Activated naive CD4-positive, alpha-beta T cell treated with anti-CD3 and anti-CD28 coated beads for 36 hours (primary cell): ENCODE measurements at regions of chr7 and their contacts with region 1.

Region 1: GRCh38 chr7:157250605-157251228 is 86.1 kb upstream of the DNAJB6 start:
- DNase-seq: peak; percentile 70
- H3K4me3 Mint-ChIP-seq: no peak overlapping the region
- H3K27ac Mint-ChIP-seq: no peak overlapping the region
- H3K4me1 Mint-ChIP-seq: no peaks in the 10 kb centered on the region
- H3K27me3 Mint-ChIP-seq: no peaks in the 10 kb centered on the region

Region 2: GRCh38 chr7:156735851-156736250 is 514.9 kb before region 1 on chr7:
- CTCF ChIA-PET with region 1: no interaction called
- intact Hi-C with region 1: no loop called
- DNase-seq: no peak
- H3K4me3 Mint-ChIP-seq: no peak overlapping the region
- H3K27ac Mint-ChIP-seq: no peak overlapping the region
- H3K4me1 Mint-ChIP-seq: no peaks in the 10 kb centered on the region
- H3K27me3 Mint-ChIP-seq: no peaks in the 10 kb centered on the region

Region 3: DNA sequence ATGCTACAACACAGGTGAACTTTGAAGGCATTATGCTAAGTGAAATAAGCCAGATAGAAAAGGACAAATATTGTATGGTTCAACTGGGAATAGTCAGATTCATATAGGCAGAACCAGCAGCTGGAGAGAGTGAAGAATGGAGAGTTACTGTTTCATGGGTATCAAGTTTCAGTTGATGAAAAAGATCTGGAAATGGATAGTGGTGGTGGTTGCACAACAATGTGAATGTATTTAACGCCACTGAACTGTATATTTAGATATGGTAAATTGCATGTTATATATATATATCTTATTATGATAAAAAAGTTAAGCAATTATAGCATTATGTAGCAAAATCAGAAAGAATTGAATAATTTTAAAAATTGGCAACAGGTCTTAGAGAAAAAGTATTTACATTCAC is 361.6 kb before region 1 on chr7:
- CTCF ChIA-PET with region 1: no interaction called
- intact Hi-C with region 1: no loop called
- DNase-seq: no peak
- H3K4me3 Mint-ChIP-seq: no peak overlapping the region
- H3K27ac Mint-ChIP-seq: no peak overlapping the region
- H3K4me1 Mint-ChIP-seq: peaks cover 30% of the 10 kb centered on the region
- H3K27me3 Mint-ChIP-seq: no peaks in the 10 kb centered on the region

Region 4: GRCh38 chr7:156907656-156908055 is 343.1 kb before region 1 on chr7:
- CTCF ChIA-PET with region 1: interaction called, 4 read pairs
- intact Hi-C with region 1: loop called (anchors 1 kb)
- DNase-seq: no peak
- H3K4me3 Mint-ChIP-seq: no peak overlapping the region
- H3K27ac Mint-ChIP-seq: no peak overlapping the region
- H3K4me1 Mint-ChIP-seq: peaks cover 12% of the 10 kb centered on the region
- H3K27me3 Mint-ChIP-seq: peaks cover 7% of the 10 kb centered on the region

Region 5: DNA sequence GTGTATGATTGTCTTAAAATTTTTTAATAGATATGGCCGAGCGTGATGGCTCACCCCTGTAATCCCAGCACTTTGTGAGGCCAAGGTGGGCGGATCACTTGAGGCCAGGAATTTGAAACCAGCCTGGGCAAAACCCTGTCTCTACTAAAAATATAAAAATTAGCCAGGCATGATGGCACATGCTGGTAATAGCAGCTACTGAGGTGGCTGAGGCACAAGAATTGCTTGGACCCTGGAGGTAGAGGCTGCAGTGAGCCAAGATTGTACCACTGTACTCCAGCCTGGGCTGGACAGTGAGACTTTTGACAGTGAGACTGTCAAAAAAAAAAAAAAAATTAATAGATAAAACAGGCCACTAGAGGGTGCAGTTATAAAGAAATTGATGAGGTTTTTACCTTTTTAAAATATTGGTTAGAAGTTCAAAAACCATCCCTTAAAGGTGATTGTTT is 280.7 kb before region 1 on chr7:
- CTCF ChIA-PET with region 1: no interaction called
- intact Hi-C with region 1: loop called (anchors 1 kb)
- DNase-seq: no peak
- H3K4me3 Mint-ChIP-seq: no peak overlapping the region
- H3K27ac Mint-ChIP-seq: no peak overlapping the region
- H3K4me1 Mint-ChIP-seq: no peaks in the 10 kb centered on the region
- H3K27me3 Mint-ChIP-seq: no peaks in the 10 kb centered on the region

Region 6: DNA sequence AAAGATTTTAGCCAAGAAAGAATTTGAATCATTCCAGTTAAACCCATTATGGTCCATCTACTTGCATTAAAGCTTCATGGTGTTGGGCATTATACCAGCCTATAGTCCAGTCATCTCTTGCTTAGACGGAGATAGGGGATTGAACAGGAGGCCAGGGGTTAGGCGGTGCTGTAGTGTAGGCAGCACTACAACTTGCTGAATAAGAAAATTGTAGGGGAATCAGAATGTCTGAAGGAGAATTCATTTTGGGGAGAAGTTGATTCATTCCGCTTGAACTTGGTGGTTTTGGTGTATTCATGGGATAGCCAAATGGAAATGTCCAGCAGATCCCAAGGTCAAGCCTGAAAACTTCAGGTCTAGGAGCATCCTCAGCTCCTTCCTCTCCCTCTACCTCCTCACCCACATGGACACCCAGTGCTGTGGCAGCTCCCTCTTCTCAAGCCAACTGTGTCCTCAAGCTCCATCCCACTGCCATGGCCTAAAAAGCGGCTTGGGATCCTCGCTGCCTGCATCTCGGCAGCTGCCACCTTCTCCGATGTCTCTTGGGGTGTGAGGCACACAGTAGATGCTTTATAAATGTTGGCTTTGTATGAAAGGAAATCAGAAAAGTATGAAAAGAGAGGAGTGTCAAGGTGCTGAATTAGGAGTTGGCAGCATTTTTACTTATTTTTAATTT is 176.6 kb before region 1 on chr7:
- CTCF ChIA-PET with region 1: no interaction called
- intact Hi-C with region 1: no loop called
- DNase-seq: no peak
- H3K4me3 Mint-ChIP-seq: no peak overlapping the region
- H3K27ac Mint-ChIP-seq: no peak overlapping the region
- H3K4me1 Mint-ChIP-seq: no peaks in the 10 kb centered on the region
- H3K27me3 Mint-ChIP-seq: peaks cover 50% of the 10 kb centered on the region

Region 7: GRCh38 chr7:157292699-157293412 is 42.1 kb after region 1 on chr7:
- CTCF ChIA-PET with region 1: no interaction called
- intact Hi-C with region 1: no loop called
- DNase-seq: no peak
- H3K4me3 Mint-ChIP-seq: no peak overlapping the region
- H3K27ac Mint-ChIP-seq: no peak overlapping the region
- H3K4me1 Mint-ChIP-seq: peaks cover 6% of the 10 kb centered on the region
- H3K27me3 Mint-ChIP-seq: no peaks in the 10 kb centered on the region